B cell (primary cell): ENCODE measurements at regions of chr19 and their contacts with region 1.

Region 1: GRCh38 chr19:45902651-45903625 is 525 bp upstream of the MYPOP start:
- DNase-seq: peak; percentile 100
- ATAC-seq: peak; percentile 83
- H3K4me3 ChIP-seq: peak overlapping the region; percentile 68 to 88 (median 74)
- H3K4me3 Mint-ChIP-seq: peak overlapping the region; percentile 89
- H3K27ac ChIP-seq: peak overlapping the region; percentile 64 to 70
- H3K27ac Mint-ChIP-seq: peak overlapping the region; percentile 95
- H3K4me1 ChIP-seq: peaks cover 16 to 21% of the 10 kb centered on the region in 2 donors
- H3K4me1 Mint-ChIP-seq: peaks cover 32% of the 10 kb centered on the region
- H3K27me3 ChIP-seq: no peaks in the 10 kb centered on the region
- H3K27me3 Mint-ChIP-seq: no peaks in the 10 kb centered on the region
- CTCF ChIP-seq: no peak

Region 2: DNA sequence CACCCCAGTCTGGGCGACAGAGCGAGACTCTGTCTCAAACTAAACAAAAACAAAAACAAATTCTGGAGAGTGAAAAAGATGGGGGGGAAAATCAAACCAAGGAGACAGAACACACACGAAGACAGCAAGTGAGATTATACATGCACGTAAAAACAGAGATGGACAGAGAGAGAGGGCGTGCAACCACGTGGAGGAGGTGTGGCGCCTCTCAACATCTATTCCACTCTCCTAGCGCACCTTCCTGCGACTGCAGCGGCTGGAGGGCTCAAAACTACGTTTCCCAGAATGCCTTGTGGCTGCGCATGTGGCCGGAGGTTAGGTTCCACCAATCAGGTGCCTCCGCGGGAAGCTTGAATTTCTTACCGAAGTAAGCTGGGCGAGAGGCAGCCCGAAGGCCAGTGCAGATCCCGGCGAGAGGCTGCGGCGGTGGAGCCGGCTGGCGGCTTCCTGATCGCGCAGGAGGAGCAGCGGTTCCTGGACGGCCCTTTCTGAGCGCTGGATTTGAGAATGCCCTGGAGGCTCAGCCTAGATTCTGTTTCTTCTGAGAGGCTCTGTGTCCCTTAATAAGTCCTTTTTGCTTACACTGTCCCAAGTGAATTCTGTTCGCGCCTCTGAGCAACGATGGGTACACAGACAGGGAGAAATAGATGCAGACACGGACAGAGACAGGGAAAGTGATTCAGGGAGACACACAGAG is 24.8 kb after region 1 on chr19:
- CTCF ChIA-PET with region 1: no interaction called
- POLR2A ChIA-PET with region 1: no interaction called
- intact Hi-C with region 1: loop called (anchors 1 kb)
- DNase-seq: peak; percentile 93
- ATAC-seq: peak; percentile 99
- H3K4me3 ChIP-seq: no peak overlapping the region
- H3K4me3 Mint-ChIP-seq: peak overlapping the region; percentile 32
- H3K27ac ChIP-seq: no peak overlapping the region
- H3K27ac Mint-ChIP-seq: no peak overlapping the region
- H3K4me1 ChIP-seq: peaks cover 7 to 8% of the 10 kb centered on the region in 2 donors
- H3K4me1 Mint-ChIP-seq: peaks cover 8% of the 10 kb centered on the region
- H3K27me3 ChIP-seq: peaks cover 0 to 8% (median 1%) of the 10 kb centered on the region in 4 experiments
- H3K27me3 Mint-ChIP-seq: peaks cover 11% of the 10 kb centered on the region
- CTCF ChIP-seq: no peak

Region 3: DNA sequence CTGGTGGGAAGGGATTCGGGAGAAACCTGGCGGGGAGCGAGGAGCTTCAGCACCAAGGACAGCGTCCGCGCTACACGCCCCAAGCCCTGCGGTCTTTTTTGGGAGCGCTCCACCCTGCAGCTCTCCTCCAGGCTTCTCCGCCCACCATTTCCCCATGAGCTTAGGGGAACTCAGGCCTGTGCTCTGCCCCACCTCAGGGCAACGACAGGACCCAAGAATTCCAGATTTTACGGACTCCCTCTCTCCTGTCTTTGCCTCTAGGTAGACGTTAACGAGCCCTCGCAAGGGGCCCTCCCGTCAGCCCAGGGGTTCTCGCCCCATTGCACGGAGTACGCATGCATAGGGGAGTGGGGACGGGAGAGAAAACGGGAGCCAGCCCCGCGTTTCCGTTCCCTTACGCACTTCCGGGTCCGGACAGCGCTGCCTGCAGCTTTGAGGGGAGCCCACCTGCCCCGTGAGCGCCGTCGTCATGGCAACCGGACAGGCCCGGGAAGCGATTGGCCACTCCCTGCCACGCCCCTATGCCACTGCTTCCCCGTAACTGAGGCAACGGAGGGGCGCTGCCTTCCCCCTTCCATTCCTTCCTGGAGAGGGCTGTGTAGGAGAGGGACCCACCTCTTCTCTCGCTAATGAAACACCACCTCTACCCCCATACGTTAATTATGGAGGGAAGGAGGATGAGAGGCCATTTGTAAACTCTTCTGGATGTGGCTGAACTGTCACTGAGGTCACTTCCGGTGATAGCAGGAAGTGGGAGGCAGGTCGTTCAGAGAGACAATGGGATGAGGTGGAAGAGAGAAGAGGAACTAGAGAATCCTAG is 50.0 kb after region 1 on chr19:
- CTCF ChIA-PET with region 1: no interaction called
- POLR2A ChIA-PET with region 1: no interaction called
- intact Hi-C with region 1: no loop called
- DNase-seq: peak; percentile 53
- ATAC-seq: no peak
- H3K4me3 ChIP-seq: peak overlapping the region in 4 of 5 experiments; percentile 15 to 64 (median 34)
- H3K4me3 Mint-ChIP-seq: peak overlapping the region; percentile 82
- H3K27ac ChIP-seq: no peak overlapping the region
- H3K27ac Mint-ChIP-seq: no peak overlapping the region
- H3K4me1 ChIP-seq: peaks cover 7 to 11% of the 10 kb centered on the region in 2 donors
- H3K4me1 Mint-ChIP-seq: peaks cover 6% of the 10 kb centered on the region
- H3K27me3 ChIP-seq: peaks cover 0 to 24% (median 5%) of the 10 kb centered on the region in 4 experiments
- H3K27me3 Mint-ChIP-seq: peaks cover 35% of the 10 kb centered on the region
- CTCF ChIP-seq: no peak

Region 4: GRCh38 chr19:45994989-45995714 is 92.2 kb after region 1 on chr19 and contains the start of gene CCDC61:
- CTCF ChIA-PET with region 1: interaction called, 3 read pairs
- POLR2A ChIA-PET with region 1: no interaction called
- intact Hi-C with region 1: loop called (anchors 1 kb)
- DNase-seq: peak; percentile 99
- ATAC-seq: peak; percentile 93
- H3K4me3 ChIP-seq: peak within 1 kb of the TSS; percentile 71 to 92 (median 78)
- H3K4me3 Mint-ChIP-seq: peak within 1 kb of the TSS; percentile 58
- H3K27ac ChIP-seq: peak within 1 kb of the TSS; percentile 55 to 84
- H3K27ac Mint-ChIP-seq: no peak within 1 kb of the TSS
- H3K4me1 ChIP-seq: peaks cover 19 to 21% of the 10 kb centered on the region in 2 donors
- H3K4me1 Mint-ChIP-seq: peaks cover 27% of the 10 kb centered on the region
- H3K27me3 ChIP-seq: peaks cover 0 to 9% (median 5%) of the 10 kb centered on the region in 4 experiments
- H3K27me3 Mint-ChIP-seq: peaks cover 21% of the 10 kb centered on the region
- CTCF ChIP-seq: no peak
- total RNA-seq, gene CCDC61: 30.1 and 37.0 TPM in 2 replicates